GM23248 (cell line): ENCODE measurements at regions of chr18 and their contacts with region 1.

Region 1: DNA sequence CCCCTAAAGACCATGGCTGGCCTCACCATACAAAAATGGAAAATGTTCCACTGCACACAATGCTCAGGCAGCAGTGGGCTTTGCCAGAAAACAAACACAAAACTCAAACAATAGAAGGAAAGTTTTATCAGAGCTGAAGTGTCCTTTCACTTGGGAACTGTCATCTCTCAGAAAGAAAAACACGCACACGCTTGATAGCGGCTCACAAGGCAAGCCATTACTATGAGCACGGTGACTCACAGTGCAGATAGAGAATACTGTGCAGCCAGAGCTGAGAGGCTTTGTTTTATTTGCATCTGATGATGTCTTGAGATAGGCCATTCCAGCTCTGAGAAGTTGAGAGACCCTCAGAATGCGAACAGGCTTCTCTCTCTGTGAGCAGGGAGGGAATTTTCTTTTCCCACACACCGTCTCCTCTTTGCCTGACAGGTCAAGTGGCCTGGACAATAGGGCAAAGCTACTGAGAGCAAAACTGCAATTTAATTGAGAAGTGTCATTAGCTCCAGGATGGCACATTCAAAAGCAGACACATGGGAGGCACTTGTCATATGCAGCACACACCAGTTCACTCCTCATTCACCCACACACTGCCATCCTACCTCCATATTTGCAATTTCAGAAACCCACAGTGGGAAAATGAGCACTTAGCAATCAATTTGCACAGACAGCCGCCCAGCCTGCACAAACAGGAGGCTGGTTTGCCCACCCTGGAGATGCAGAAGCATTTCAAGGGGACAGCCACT is 236.6 kb downstream of the SS18 start:
- DNase-seq: no peak
- H3K4me3 ChIP-seq: no peak overlapping the region
- H3K27ac ChIP-seq: no peak overlapping the region
- H3K4me1 ChIP-seq: no peaks in the 10 kb centered on the region
- H3K27me3 ChIP-seq: no peaks in the 10 kb centered on the region; the same call in 1 of the 2 replicates

Region 2: GRCh38 chr18:25759111-25759510 is 94.8 kb before region 1 on chr18:
- in situ Hi-C with region 1: loop called (anchors 25 kb)
- DNase-seq: no peak
- H3K4me3 ChIP-seq: no peak overlapping the region
- H3K27ac ChIP-seq: no peak overlapping the region
- H3K4me1 ChIP-seq: no peaks in the 10 kb centered on the region
- H3K27me3 ChIP-seq: peaks cover under 1% of the 10 kb centered on the region; the same call in 1 of the 2 replicates